A549 (cell line): ENCODE measurements at regions of chr2 and their contacts with region 1.

Region 1: GRCh38 chr2:121297217-121297830 is 12.3 kb upstream of the TFCP2L1 start:
- DNase-seq: peak; percentile 50 to 73
- ATAC-seq: peak; percentile 96 to 97
- H3K4me3 ChIP-seq: no peak overlapping the region
- H3K27ac ChIP-seq: no peak overlapping the region
- H3K4me1 ChIP-seq: no peaks in the 10 kb centered on the region
- CTCF ChIP-seq: peak; percentile 53
- EP300 ChIP-seq: no peak
- POLR2A ChIP-seq: no peak
- RAD21 ChIP-seq: peak; percentile 41 to 56; a peak in 4 of 5 replicates

Region 2: DNA sequence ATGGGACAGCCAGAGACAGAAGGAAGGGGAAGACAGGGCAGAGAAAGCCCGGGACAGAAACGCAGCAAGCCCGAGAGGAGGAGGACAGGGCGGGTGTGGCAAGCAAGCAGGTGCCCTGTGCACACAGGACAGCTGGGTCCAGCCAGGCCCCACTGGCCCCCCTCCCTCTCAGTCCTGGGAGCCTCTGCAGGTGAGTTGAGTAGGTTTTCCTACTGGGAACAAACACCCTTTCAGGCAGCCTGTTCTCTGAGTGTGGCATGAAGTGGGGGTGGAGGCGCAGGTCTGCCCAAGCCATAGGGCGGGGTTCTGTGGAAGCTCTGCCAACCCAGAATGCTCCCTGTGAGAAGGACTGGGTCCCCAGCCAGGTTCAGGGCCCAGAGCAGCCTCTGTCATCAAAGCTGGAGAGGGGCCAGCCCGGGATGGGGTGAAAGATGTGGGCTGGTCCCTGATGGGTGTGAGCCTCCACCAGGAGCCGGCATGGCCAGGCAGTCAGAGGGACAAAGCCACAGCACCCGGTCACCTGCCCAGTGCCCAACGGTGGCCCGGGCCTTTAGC is 141.7 kb before region 1 on chr2:
- CTCF ChIA-PET with region 1: no interaction called
- POLR2A ChIA-PET with region 1: no interaction called
- DNase-seq: no peak
- ATAC-seq: peak; percentile 38 to 42; a peak in 4 of 6 replicates
- H3K4me3 ChIP-seq: no peak overlapping the region
- H3K27ac ChIP-seq: no peak overlapping the region
- H3K4me1 ChIP-seq: no peaks in the 10 kb centered on the region
- CTCF ChIP-seq: no peak
- EP300 ChIP-seq: no peak
- POLR2A ChIP-seq: no peak
- RAD21 ChIP-seq: no peak

Region 3: DNA sequence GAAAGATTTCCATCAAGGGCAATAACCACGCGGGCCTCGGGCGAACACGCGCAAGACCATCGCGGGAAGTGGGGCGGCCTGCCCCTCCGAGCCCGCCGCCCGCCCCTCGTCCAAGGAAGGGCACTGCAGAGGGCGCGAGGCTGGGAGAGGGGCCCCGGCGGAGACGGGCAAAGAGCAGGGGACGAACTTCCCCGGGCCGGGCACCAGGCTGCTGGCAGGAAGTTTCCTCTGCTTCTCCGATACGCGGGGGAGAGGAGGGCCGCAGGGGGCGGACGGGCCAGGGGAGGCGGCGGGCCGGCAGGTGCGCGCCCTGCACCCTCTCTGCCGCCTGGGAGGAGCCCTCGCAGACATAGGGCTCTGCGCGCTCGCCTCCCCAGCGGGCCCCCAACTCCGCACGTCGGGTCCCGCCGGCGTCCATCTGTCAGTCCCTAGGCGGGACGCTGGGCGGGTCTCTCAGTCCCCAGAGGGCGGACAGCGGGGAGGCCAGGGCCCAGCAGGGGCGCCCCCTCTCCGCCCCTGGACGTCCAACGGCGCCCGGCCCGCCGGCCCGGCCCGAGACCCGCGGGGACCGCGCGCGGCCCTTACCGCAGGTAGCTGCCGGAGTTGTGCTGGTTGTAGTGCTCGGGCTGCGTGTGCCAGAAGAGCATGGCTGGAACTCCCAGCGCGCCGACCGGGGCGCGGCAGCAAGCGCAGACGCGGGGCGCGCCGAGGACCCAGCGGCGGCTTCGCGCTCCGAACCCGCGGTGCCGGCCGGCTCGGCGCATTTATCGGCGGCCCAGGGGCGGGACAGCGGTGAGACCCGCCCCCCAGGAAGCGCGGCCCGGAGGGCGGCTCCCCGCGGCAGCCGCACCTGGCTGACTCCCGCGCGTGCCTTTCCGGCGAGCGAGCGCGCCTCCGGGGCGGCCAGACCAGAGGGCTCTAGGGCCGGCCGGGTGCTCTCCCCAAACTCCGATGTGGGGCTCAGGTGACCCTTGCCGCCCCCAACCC is 12.6 kb before region 1 on chr2 and contains the start of gene TFCP2L1:
- CTCF ChIA-PET with region 1: interaction called, 24 read pairs
- POLR2A ChIA-PET with region 1: no interaction called
- DNase-seq: peak; percentile 43 to 54
- ATAC-seq: peak; percentile 63 to 74
- H3K4me3 ChIP-seq: peak within 1 kb of the TSS; percentile 90
- H3K27ac ChIP-seq: peak within 1 kb of the TSS; percentile 81 to 83
- H3K4me1 ChIP-seq: peaks cover 31% of the 10 kb centered on the region
- CTCF ChIP-seq: 0 out of 3 replicates have a peak, but pooled peaks have one; percentile 8
- EP300 ChIP-seq: no peak
- POLR2A ChIP-seq: peak; percentile 63
- RAD21 ChIP-seq: no peak
- polyA plus RNA-seq, gene TFCP2L1: 3.1 and 4.3 TPM in 2 replicates